ENCODE measurements at regions of chr15 and their contacts with region 1.

Region 1: DNA sequence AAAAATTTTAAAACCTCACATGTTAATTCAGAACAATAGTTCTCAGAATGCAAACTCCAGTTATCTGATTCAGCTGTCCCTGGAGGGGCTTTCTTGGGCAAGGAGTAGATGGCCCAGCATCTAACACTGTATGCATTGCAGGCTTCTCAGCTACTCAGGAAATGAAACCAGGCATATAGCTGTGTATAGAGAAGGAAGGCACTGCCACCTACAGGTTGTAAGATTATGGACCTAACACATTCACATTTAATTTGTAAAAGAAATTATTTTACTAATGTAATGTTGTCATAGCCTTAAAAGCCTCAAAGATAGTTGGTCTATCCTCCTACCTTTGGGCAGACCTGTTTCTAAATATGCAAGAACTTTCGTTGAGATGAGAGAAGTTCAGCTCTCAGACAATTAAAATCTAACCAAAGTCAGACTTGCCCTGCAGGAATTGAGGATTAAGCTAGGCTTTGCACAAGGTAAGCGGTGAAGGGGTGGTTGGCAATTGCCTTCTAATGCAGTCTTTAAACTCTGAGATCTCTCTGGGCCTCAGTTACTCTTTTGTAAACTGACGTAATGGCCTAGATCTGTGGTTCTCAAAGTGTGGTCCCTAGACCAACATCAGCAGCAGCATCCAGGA is 132.8 kb upstream of the SLC24A5 start:
- DNase-seq: peak; percentile 32
- H3K4me3 ChIP-seq: no peak overlapping the region
- H3K27ac ChIP-seq: no peak overlapping the region
- H3K4me1 ChIP-seq: no peaks in the 10 kb centered on the region
- H3K27me3 ChIP-seq: no peaks in the 10 kb centered on the region
- CTCF ChIP-seq: peak; percentile 56 to 69

Region 2: GRCh38 chr15:47293466-47294162 is 694.4 kb before region 1 on chr15:
- CTCF ChIA-PET with region 1: no interaction called
- dilution Hi-C with region 1: no loop called
- in situ Hi-C with region 1: no loop called
- intact Hi-C with region 1: loop called (anchors 5 kb)
- DNase-seq: peak; percentile 58
- H3K4me3 ChIP-seq: no peak overlapping the region
- H3K27ac ChIP-seq: no peak overlapping the region
- H3K4me1 ChIP-seq: peaks cover 4% of the 10 kb centered on the region
- H3K27me3 ChIP-seq: no peaks in the 10 kb centered on the region
- CTCF ChIP-seq: no peak

Region 3: GRCh38 chr15:47473832-47474231 is 514.2 kb before region 1 on chr15:
- CTCF ChIA-PET with region 1: interaction called, 3 read pairs
- dilution Hi-C with region 1: no loop called
- in situ Hi-C with region 1: no loop called
- intact Hi-C with region 1: loop called (anchors 1 kb)
- DNase-seq: no peak
- H3K4me3 ChIP-seq: no peak overlapping the region
- H3K27ac ChIP-seq: no peak overlapping the region
- H3K4me1 ChIP-seq: no peaks in the 10 kb centered on the region
- H3K27me3 ChIP-seq: no peaks in the 10 kb centered on the region
- CTCF ChIP-seq: no peak

Region 4: DNA sequence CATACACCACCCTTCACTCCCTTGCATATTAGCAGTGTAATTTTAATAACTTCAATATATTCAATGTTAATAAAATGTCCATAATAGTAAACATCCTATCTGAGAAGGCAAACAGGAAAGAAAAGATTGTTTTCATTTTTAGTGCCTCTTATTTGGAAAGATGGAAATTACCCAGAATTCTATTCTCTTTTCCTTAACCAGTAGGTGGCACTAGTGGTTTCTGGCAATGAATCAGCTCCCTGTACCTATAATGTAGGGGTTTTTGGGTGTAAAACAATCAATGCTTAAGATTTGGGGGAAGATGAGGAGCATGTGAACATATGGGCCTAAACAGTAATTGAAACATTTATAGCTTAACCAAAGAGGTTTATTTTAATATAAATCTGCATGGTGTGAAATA is 276.4 kb before region 1 on chr15:
- CTCF ChIA-PET with region 1: interaction called, 5 read pairs
- dilution Hi-C with region 1: no loop called
- in situ Hi-C with region 1: loop called (anchors 25 kb)
- intact Hi-C with region 1: loop called (anchors 1 kb)
- DNase-seq: peak; percentile 5
- H3K4me3 ChIP-seq: no peak overlapping the region
- H3K27ac ChIP-seq: no peak overlapping the region
- H3K4me1 ChIP-seq: no peaks in the 10 kb centered on the region
- H3K27me3 ChIP-seq: no peaks in the 10 kb centered on the region
- CTCF ChIP-seq: peak; percentile 58 to 72

Region 5: GRCh38 chr15:48084759-48085590 is 97.0 kb after region 1 on chr15:
- CTCF ChIA-PET with region 1: interaction called, 5 read pairs
- dilution Hi-C with region 1: no loop called
- in situ Hi-C with region 1: no loop called
- intact Hi-C with region 1: loop called (anchors 1 kb)
- DNase-seq: peak; percentile 6
- H3K4me3 ChIP-seq: no peak overlapping the region
- H3K27ac ChIP-seq: no peak overlapping the region
- H3K4me1 ChIP-seq: no peaks in the 10 kb centered on the region
- H3K27me3 ChIP-seq: no peaks in the 10 kb centered on the region
- CTCF ChIP-seq: peak; percentile 39 to 73

Region 6: DNA sequence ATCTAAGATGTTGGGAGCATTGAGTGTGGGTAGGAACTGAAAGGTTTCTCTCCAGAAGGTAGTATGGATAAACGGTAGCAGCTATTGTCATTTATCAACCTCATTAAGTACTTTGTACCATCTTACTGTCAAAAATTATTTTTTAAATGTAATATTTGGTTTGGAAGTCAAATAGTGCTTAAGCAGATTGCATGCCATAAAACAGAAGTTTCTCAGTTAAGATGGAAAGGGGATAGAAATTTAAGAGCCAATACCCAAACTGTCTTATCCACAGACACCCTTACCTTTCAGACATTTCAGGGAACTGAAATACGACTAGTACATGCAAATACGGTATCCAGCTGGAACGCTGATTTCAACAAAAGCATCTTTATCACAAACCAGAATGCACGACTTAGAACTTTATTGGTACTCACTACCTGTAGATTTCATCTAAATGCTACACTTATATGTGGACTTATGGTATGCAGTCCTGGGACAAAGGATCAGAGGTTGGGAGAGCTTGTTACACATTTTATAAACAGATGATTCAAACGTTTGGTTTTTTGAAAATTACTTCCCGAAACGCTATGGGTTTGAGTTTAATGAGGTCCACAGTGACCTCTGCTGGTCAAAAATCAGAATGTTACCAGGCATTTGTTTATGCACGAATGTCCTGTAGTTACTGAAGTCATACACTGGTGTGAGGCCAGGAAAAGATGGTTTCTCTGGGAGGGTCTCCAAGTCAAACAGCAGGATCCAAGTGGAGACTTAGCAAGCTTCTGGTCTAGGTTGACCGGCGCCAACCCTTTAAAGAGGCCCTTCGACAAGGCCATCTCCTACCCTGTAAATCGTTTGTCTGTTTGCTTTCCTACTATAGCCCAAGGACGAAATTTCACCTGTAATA is 297.6 kb after region 1 on chr15:
- CTCF ChIA-PET with region 1: no interaction called
- dilution Hi-C with region 1: no loop called
- in situ Hi-C with region 1: no loop called
- intact Hi-C with region 1: loop called (anchors 5 kb)
- DNase-seq: peak; percentile 63
- H3K4me3 ChIP-seq: no peak overlapping the region
- H3K27ac ChIP-seq: no peak overlapping the region
- H3K4me1 ChIP-seq: no peaks in the 10 kb centered on the region
- H3K27me3 ChIP-seq: peaks cover 6% of the 10 kb centered on the region
- CTCF ChIP-seq: peak; percentile 66 to 67